CD4-positive, alpha-beta T cell (primary cell): ENCODE measurements at regions of chr1 and their contacts with region 1.

Region 1: DNA sequence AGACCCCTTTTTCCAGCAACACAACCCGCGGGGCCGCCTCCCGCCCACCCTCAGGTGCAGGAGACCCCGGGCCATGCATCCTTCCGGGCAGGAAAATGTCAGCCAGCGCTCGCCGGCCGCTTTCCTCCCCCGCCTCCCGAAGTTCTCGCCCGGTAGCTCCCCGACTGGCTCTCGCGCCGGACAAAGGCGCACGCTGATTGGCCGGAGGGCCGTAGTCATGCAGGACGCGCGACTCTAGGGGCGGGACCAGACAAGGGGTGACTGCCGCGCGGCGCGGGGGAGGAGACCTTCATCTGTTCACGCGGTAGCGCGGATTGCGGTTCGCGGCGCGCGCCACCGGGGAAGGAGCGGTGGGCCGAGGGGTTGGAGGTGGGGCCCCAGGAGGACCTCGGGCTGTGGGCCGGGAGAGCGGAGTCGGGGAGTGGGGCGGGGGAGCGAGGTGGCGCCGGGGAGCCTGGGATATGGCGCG is at the start of gene FLVCR1:
- DNase-seq: peak; percentile 78 to 95 (median 86)
- ATAC-seq: peak; percentile 95
- H3K4me3 ChIP-seq: peak within 1 kb of the TSS; percentile 92
- H3K4me3 Mint-ChIP-seq: peak within 1 kb of the TSS; percentile 72
- H3K27ac ChIP-seq: peak within 1 kb of the TSS; percentile 55 to 63
- H3K27ac Mint-ChIP-seq: peak within 1 kb of the TSS; percentile 89
- H3K4me1 ChIP-seq: peaks cover 33% of the 10 kb centered on the region
- H3K4me1 Mint-ChIP-seq: peaks cover 18% of the 10 kb centered on the region
- H3K27me3 ChIP-seq: no peaks in the 10 kb centered on the region
- H3K27me3 Mint-ChIP-seq: no peaks in the 10 kb centered on the region
- CTCF ChIP-seq: no peak
- total RNA-seq, gene FLVCR1: 8.4 to 9.5 TPM

Region 2: GRCh38 chr1:212414328-212415106 is 443.5 kb before region 1 on chr1 and contains the start of gene PACC1:
- CTCF ChIA-PET with region 1: no interaction called
- POLR2A ChIA-PET with region 1: no interaction called
- intact Hi-C with region 1: loop called in 1 of 2 experiments (anchors 10 kb)
- DNase-seq: peak; percentile 70 to 95 (median 81)
- ATAC-seq: peak; percentile 85
- H3K4me3 ChIP-seq: peak within 1 kb of the TSS; percentile 76
- H3K4me3 Mint-ChIP-seq: peak within 1 kb of the TSS; percentile 89
- H3K27ac ChIP-seq: peak within 1 kb of the TSS; percentile 40 to 72
- H3K27ac Mint-ChIP-seq: peak within 1 kb of the TSS; percentile 82
- H3K4me1 ChIP-seq: peaks cover 30% of the 10 kb centered on the region
- H3K4me1 Mint-ChIP-seq: peaks cover 22% of the 10 kb centered on the region
- H3K27me3 ChIP-seq: no peaks in the 10 kb centered on the region
- H3K27me3 Mint-ChIP-seq: no peaks in the 10 kb centered on the region
- CTCF ChIP-seq: no peak
- total RNA-seq, gene PACC1: 1.8 to 2.1 TPM

Region 3: GRCh38 chr1:213051127-213051880 is 193.3 kb after region 1 on chr1 and contains the start of gene RPS6KC1:
- CTCF ChIA-PET with region 1: no interaction called
- POLR2A ChIA-PET with region 1: no interaction called
- intact Hi-C with region 1: loop called in 1 of 2 experiments (anchors 2 kb)
- DNase-seq: peak; percentile 69 to 90 (median 76)
- ATAC-seq: peak; percentile 97
- H3K4me3 ChIP-seq: peak within 1 kb of the TSS; percentile 82
- H3K4me3 Mint-ChIP-seq: peak within 1 kb of the TSS; percentile 90
- H3K27ac ChIP-seq: peak within 1 kb of the TSS; percentile 50 to 72
- H3K27ac Mint-ChIP-seq: peak within 1 kb of the TSS; percentile 84
- H3K4me1 ChIP-seq: peaks cover 17% of the 10 kb centered on the region
- H3K4me1 Mint-ChIP-seq: peaks cover 39% of the 10 kb centered on the region
- H3K27me3 ChIP-seq: peaks cover 0 to 7% of the 10 kb centered on the region in 2 experiments
- H3K27me3 Mint-ChIP-seq: peaks cover 26% of the 10 kb centered on the region
- CTCF ChIP-seq: no peak
- total RNA-seq, gene RPS6KC1: 6.2 to 7.0 TPM